ENCODE measurements at regions of chr2 and their contacts with region 1.

Region 1: DNA sequence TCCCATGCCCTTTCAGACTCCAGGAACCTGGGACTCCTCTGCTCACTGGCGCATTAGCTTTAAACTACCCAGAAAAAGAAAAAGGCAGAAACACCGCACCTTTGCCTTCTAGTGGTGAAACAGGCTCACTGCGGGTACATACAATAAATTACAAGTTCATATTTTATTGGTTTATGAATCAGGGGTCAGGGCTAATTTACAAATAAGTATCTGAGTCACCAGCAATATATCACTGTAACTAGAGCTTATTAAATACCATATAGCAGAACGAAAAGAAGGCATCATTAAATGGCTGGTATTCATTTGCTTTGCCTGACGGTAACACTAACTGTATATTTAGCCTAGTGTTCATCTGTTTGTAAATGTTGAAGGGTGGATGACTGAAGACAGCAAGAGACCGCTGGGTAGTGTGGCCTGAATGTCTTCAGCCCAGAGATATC is 26.9 kb upstream of the DTNB start:
- DNase-seq: peak in 8 of 14 experiments; percentile 4 to 55 (median 26)
- ATAC-seq: peak; percentile 70
- H3K4me3 ChIP-seq: no peak overlapping the region
- H3K4me3 Mint-ChIP-seq: no peak overlapping the region
- H3K27ac ChIP-seq: no peak overlapping the region
- H3K27ac Mint-ChIP-seq: no peak overlapping the region
- H3K4me1 ChIP-seq: no peaks in the 10 kb centered on the region
- H3K4me1 Mint-ChIP-seq: peaks cover 4% of the 10 kb centered on the region
- H3K27me3 ChIP-seq: no peaks in the 10 kb centered on the region
- H3K27me3 Mint-ChIP-seq: peaks cover 4% of the 10 kb centered on the region
- CTCF ChIP-seq: peak; percentile 77

Region 2: GRCh38 chr2:25606892-25607291 is 93.3 kb before region 1 on chr2:
- CTCF ChIA-PET with region 1: interaction called, 45 read pairs
- POLR2A ChIA-PET with region 1: interaction called, 10 read pairs
- intact Hi-C with region 1: loop called (anchors 1 kb)
- DNase-seq: peak in 4 of 14 experiments; percentile 17 to 57 (median 49)
- ATAC-seq: peak; percentile 44
- H3K4me3 ChIP-seq: no peak overlapping the region
- H3K4me3 Mint-ChIP-seq: no peak overlapping the region
- H3K27ac ChIP-seq: no peak overlapping the region
- H3K27ac Mint-ChIP-seq: no peak overlapping the region
- H3K4me1 ChIP-seq: no peaks in the 10 kb centered on the region
- H3K4me1 Mint-ChIP-seq: peaks cover 3% of the 10 kb centered on the region
- H3K27me3 ChIP-seq: no peaks in the 10 kb centered on the region
- H3K27me3 Mint-ChIP-seq: no peaks in the 10 kb centered on the region
- CTCF ChIP-seq: peak; percentile 69

Region 3: GRCh38 chr2:25673300-25674076 is 26.8 kb before region 1 on chr2 and contains the start of gene DTNB:
- CTCF ChIA-PET with region 1: interaction called, 4 read pairs
- POLR2A ChIA-PET with region 1: no interaction called
- intact Hi-C with region 1: loop called in 1 of 2 experiments (anchors 1 kb)
- DNase-seq: peak; percentile 58 to 92 (median 76)
- ATAC-seq: peak; percentile 75
- H3K4me3 ChIP-seq: peak within 1 kb of the TSS; percentile 84
- H3K4me3 Mint-ChIP-seq: peak within 1 kb of the TSS; percentile 91
- H3K27ac ChIP-seq: peak within 1 kb of the TSS; percentile 43 to 66
- H3K27ac Mint-ChIP-seq: peak within 1 kb of the TSS; percentile 85
- H3K4me1 ChIP-seq: peaks cover 23% of the 10 kb centered on the region
- H3K4me1 Mint-ChIP-seq: peaks cover 35% of the 10 kb centered on the region
- H3K27me3 ChIP-seq: peaks cover 0 to 2% of the 10 kb centered on the region in 2 experiments
- H3K27me3 Mint-ChIP-seq: no peaks in the 10 kb centered on the region
- CTCF ChIP-seq: no peak
- total RNA-seq, gene DTNB: 30.1 to 33.6 TPM

Region 4: DNA sequence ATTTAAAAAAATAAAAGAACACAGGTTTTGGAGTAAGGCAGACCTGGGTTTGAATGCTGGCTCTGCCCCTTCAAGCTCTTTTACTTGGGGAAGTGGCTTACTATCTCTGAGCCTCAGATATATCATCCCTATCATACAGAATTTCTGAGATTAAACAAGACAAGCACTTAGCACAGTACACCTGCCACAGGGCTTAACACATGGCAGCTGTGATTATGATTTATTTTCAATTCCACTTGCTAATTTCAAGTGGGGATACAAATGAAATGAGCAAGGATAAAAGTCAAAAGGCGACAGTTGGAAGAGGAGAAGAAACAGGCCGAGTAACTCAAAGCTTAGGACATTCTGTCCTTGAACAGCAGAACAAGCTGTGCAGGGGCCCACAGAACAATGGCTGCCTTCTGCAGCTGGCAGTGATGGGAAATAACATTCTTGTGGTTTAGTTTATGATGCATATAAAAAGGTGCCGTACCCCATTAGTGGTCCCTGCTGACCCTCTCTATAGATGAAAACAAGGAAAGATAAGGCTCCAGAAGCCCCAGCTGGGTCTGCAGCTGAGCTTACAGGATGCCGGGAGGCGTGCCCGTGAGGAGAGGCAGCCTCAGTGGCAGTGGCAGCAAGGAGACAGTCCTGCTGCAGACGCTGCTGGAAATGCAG is 236.8 kb after region 1 on chr2:
- CTCF ChIA-PET with region 1: no interaction called
- POLR2A ChIA-PET with region 1: no interaction called
- intact Hi-C with region 1: no loop called
- DNase-seq: no peak
- ATAC-seq: no peak
- H3K4me3 ChIP-seq: no peak overlapping the region
- H3K4me3 Mint-ChIP-seq: no peak overlapping the region
- H3K27ac ChIP-seq: no peak overlapping the region
- H3K27ac Mint-ChIP-seq: no peak overlapping the region
- H3K4me1 ChIP-seq: no peaks in the 10 kb centered on the region
- H3K4me1 Mint-ChIP-seq: no peaks in the 10 kb centered on the region
- H3K27me3 ChIP-seq: no peaks in the 10 kb centered on the region
- H3K27me3 Mint-ChIP-seq: no peaks in the 10 kb centered on the region
- CTCF ChIP-seq: no peak